Activated CD4-positive, alpha-beta memory T cell treated with anti-CD3 and anti-CD28 coated beads for 36 hours (primary cell): ENCODE measurements at regions of chr2 and their contacts with region 1.

Region 1: DNA sequence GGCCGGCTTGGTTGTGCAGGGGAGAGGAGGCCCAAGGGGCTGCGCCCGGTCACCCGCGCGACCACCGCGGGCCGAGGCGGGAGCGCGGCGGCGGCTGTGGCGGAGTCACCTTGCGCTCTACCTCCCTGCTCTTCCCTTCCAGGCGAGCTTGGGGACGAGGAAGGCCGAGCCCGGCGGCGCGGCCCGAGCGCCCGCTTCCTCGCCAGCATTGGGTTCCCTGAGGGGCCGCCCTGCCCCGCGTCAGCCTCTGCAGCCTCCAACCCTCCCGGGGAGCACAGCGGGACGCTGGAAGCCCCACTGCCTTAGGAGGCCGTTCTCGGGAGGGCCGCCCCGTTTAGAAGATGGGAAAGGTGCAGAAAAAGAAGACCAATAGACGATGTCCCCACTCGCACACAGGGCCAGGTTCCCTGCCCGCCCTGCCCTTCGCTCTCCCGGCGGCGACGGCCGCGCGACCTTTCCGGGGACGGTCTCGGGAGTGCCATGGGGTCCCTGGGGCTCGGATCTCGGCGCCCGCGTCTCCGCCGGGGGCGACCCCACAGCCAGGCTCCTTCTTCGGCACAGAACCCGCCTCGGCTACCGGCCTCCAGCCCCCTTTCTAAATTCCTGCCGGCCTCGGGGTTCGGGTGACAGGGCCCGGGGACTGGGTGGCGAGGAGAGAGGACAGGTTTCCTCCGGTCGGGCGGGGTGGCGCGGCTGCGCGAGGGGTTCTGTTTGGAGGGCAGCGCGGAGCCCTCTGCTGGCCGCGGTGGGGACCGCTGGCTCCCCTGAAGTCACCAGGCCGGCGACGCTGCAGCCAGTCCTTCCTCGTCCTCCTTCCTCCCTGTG is 85.5 kb downstream of the HS6ST1 start:
- DNase-seq: peak; percentile 90
- H3K4me3 Mint-ChIP-seq: peak overlapping the region; percentile 68
- H3K27ac Mint-ChIP-seq: no peak overlapping the region
- H3K4me1 Mint-ChIP-seq: peaks cover 2% of the 10 kb centered on the region
- H3K27me3 Mint-ChIP-seq: peaks cover 8% of the 10 kb centered on the region

Region 2: DNA sequence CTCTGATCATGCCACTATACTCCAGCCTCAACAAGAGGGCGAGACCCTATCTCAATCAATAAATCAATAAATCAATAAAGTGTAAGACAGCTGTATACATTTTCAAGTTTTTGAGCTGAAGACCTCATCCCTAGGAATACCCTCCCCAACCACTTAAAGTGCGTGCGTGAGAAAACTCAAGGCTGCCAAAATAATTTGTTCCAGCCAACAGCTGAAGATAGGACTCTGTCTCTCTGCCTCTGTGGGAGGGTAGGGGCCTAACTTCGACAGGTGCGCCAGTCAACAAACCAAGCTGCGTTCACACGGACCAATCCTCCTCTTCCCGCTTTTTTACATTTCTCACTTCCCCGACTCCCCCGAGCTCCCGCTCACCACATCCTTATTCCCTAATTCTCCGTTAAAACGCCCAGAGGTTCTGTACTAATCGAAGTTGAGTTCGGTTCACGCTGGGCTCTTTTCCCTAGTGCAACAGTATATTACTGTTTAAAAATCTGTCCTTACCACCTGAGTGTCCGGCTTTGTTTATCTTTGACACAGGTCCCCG is 375.8 kb before region 1 on chr2:
- CTCF ChIA-PET with region 1: no interaction called
- POLR2A ChIA-PET with region 1: no interaction called
- intact Hi-C with region 1: loop called (anchors 10 kb)
- DNase-seq: peak; percentile 14
- H3K4me3 Mint-ChIP-seq: peak overlapping the region; percentile 88
- H3K27ac Mint-ChIP-seq: peak overlapping the region; percentile 77
- H3K4me1 Mint-ChIP-seq: peaks cover 51% of the 10 kb centered on the region
- H3K27me3 Mint-ChIP-seq: no peaks in the 10 kb centered on the region

Region 3: DNA sequence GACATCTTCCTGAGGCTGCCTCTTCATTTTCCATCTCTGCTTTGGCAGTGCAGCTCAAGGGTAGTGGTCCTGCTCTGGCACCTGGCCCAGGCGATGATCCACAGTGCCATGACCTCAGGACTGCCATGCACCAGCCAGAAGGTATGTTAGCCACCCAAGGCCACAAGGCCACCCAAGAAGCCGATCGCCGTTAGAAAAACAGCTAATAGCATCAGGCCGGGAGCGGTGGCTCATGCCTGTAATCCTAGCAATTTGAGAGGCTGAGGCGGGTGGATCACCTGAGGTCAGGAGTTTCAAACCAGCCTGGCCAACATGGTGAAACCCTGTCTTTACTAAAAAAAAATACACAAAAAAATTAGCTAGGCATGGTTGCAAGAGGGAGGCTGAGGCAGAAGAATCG is 170.6 kb before region 1 on chr2:
- CTCF ChIA-PET with region 1: interaction called, 7 read pairs
- POLR2A ChIA-PET with region 1: no interaction called
- intact Hi-C with region 1: loop called (anchors 5 kb)
- DNase-seq: no peak
- H3K4me3 Mint-ChIP-seq: no peak overlapping the region
- H3K27ac Mint-ChIP-seq: no peak overlapping the region
- H3K4me1 Mint-ChIP-seq: no peaks in the 10 kb centered on the region
- H3K27me3 Mint-ChIP-seq: peaks cover 4% of the 10 kb centered on the region

Region 4: GRCh38 chr2:128178650-128179460 is 54.3 kb before region 1 on chr2:
- CTCF ChIA-PET with region 1: interaction called, 4 read pairs
- POLR2A ChIA-PET with region 1: no interaction called
- intact Hi-C with region 1: loop called (anchors 1 kb)
- DNase-seq: peak; percentile 63
- H3K4me3 Mint-ChIP-seq: no peak overlapping the region
- H3K27ac Mint-ChIP-seq: no peak overlapping the region
- H3K4me1 Mint-ChIP-seq: peaks cover 4% of the 10 kb centered on the region
- H3K27me3 Mint-ChIP-seq: no peaks in the 10 kb centered on the region

Region 5: DNA sequence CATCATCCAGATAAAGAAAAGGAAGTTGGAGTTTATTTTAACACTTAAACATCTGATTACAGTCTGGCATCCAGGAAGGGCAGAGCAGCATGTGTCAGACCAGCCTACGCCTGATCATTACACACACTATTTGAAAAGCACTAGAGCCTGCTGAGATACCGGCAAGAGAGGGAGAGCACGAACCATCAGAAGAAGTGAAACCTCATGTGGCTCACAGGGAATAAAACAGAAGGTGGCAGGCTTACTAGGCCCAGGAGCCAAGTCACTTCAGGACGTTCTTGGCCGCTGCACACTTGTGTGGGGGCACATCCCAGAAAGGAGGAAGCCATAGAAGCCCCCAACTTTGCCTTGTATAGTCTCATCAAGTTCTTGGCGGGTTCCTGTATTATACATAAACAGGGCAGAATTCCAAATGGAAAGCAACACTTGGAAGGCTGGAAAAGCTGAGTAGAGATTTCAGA is 36.7 kb before region 1 on chr2:
- CTCF ChIA-PET with region 1: no interaction called
- POLR2A ChIA-PET with region 1: no interaction called
- intact Hi-C with region 1: loop called (anchors 5 kb)
- DNase-seq: peak; percentile 16
- H3K4me3 Mint-ChIP-seq: no peak overlapping the region
- H3K27ac Mint-ChIP-seq: peak overlapping the region; percentile 24
- H3K4me1 Mint-ChIP-seq: peaks cover 27% of the 10 kb centered on the region
- H3K27me3 Mint-ChIP-seq: no peaks in the 10 kb centered on the region

Region 6: DNA sequence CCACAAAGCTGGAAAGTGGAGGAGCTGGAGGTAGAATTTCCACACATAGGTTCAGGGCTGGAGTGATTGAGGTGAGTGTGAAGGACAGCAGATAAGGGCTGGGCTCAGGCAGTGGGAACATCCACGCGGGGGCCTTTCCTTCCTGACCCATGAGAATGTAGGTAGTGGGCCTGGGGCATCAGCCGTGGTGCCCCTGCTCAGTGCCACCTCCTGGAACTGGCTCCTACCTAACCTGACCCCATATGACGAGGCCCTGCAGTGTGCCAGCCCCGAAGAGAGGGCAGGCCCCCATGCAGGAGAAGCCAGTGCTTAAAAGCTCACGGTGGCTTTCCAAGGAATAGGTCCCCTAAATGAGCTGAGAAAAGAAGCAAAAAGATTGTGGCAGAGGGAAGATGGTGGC is 19.3 kb after region 1 on chr2:
- CTCF ChIA-PET with region 1: no interaction called
- POLR2A ChIA-PET with region 1: no interaction called
- intact Hi-C with region 1: no loop called
- DNase-seq: no peak
- H3K4me3 Mint-ChIP-seq: no peak overlapping the region
- H3K27ac Mint-ChIP-seq: no peak overlapping the region
- H3K4me1 Mint-ChIP-seq: no peaks in the 10 kb centered on the region
- H3K27me3 Mint-ChIP-seq: peaks cover 2% of the 10 kb centered on the region